Activated naive CD4-positive, alpha-beta T cell treated with anti-CD3 and anti-CD28 coated beads for 36 hours (primary cell): ENCODE measurements at regions of chr14 and their contacts with region 1.

Region 1: GRCh38 chr14:90399541-90400444 is 3.0 kb downstream of the CALM1 start:
- DNase-seq: peak; percentile 93
- H3K4me3 Mint-ChIP-seq: peak overlapping the region; percentile 96
- H3K27ac Mint-ChIP-seq: peak overlapping the region; percentile 97
- H3K4me1 Mint-ChIP-seq: peaks cover 52% of the 10 kb centered on the region
- H3K27me3 Mint-ChIP-seq: no peaks in the 10 kb centered on the region

Region 2: DNA sequence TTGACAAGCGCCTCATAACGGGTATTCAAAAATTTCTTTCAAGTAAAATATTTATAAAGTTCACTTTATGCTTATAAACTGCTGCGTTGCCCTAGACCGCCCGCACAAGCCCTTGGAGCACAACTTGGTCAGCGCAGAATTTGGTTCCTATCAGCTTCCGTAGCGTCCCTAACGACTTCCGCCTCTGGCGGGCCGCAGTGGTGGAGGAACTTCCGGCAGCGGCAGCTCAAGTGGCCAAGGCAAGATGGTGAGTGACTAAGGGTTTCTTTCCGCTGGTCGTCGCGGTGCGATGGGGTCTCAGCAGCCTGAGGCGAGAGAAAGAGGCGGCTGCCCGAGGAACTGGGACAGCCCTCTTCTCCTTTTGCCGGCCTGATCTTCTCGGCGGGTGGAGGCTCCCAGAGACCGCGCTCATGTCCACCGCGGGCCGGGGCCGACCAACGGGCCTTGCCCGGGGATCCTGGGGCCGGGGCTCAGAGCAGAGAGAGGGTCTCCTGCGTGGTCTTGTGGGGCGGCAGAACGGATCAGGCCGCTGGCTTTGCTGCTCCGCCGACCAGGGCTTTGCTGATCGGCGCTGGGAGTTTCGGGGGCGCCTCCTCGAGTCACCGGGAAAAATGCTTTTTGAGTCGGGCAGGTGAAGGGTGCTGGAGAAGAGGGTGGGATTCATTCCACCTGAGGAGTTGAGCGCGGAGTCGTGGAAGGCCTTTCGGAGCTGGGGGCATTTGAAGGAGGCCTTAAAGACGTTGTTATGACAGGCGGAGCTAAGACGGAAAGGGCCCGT is 143.2 kb before region 1 on chr14 and contains the start of gene PSMC1:
- CTCF ChIA-PET with region 1: no interaction called
- intact Hi-C with region 1: loop called (anchors 2 kb)
- DNase-seq: peak; percentile 96
- H3K4me3 Mint-ChIP-seq: peak within 1 kb of the TSS; percentile 98
- H3K27ac Mint-ChIP-seq: peak within 1 kb of the TSS; percentile 93
- H3K4me1 Mint-ChIP-seq: peaks cover 32% of the 10 kb centered on the region
- H3K27me3 Mint-ChIP-seq: peaks cover 3% of the 10 kb centered on the region
- total RNA-seq, gene PSMC1: 102 to 105 TPM

Region 3: DNA sequence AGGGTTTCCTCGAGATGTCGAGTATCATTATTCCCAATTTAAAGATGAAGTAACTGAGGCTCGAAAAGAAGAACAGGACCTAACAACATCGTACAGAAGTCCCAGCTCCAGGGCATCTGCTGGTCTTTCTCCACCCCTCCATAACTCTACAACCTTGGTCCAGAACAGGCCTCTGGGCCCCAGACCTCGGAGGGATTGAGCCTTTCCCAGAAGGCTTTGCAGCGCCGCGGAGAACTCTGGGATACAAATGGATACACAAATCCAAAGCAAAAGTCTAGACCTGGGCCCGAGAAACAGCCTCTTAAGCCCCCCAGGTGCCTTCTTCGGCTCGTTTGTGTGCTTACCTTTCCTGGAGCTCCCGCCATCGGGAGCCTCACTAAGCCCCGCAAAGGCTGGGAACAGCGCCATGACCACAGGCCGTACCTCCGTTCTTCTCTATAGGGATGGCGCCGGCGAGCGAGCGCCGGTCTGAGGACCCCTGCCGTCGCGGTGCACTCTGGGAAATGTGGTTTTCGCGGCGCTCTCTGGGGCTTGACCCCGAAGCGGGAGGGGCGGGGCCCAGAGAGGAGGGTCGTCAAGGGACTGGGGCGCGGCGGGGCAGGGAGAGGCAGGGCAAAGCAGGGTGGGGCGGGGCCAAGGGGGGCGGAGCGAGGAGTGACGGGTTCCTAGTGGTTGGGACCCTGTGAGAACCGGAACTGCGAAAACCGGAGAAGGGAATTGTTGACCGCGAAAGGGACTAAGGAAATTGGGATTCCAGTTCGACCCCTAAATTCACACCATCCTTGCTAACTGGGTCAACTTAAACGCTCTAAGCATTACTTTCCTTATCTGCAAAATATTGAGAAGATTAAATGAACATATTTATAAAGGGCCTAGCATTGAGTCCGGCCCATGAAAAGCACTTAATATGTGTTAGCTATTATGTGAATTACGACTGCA is 68.0 kb before region 1 on chr14 and contains the start of gene NRDE2:
- CTCF ChIA-PET with region 1: interaction called, 3 read pairs
- intact Hi-C with region 1: loop called (anchors 1 kb)
- DNase-seq: peak; percentile 98
- H3K4me3 Mint-ChIP-seq: peak within 1 kb of the TSS; percentile 90
- H3K27ac Mint-ChIP-seq: peak within 1 kb of the TSS; percentile 92
- H3K4me1 Mint-ChIP-seq: peaks cover 23% of the 10 kb centered on the region
- H3K27me3 Mint-ChIP-seq: no peaks in the 10 kb centered on the region
- total RNA-seq, gene NRDE2: 22.0 to 23.1 TPM

Region 4: DNA sequence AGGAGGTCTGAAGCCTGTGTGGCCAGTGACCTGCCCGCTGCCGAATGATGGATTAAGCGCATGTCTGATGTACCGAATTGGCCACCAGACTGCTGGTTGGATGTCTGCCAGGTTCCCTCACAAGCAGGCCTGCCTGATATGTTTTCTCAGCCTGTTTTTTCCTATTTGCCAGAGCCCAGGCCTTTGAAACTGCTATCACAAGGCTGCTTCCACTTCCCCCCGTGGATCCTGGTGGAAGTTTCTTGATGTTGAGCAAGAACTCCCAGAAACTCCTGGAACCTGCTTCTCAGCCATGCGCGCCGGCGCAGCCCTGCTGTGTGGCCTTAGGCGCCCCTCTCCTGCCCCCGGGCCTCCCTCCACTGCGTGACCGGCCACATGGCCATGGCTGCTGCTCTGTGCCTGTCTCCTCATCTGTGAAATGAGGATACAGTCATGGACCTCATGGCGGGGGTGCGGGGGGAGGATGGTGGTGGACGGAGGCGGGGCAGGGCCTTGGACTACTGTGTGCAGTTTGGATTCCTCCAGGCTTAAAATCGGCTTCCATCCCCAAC is 53.7 kb after region 1 on chr14:
- CTCF ChIA-PET with region 1: no interaction called
- intact Hi-C with region 1: loop called (anchors 2 kb)
- DNase-seq: no peak
- H3K4me3 Mint-ChIP-seq: no peak overlapping the region
- H3K27ac Mint-ChIP-seq: no peak overlapping the region
- H3K4me1 Mint-ChIP-seq: peaks cover 9% of the 10 kb centered on the region
- H3K27me3 Mint-ChIP-seq: no peaks in the 10 kb centered on the region

Region 5: DNA sequence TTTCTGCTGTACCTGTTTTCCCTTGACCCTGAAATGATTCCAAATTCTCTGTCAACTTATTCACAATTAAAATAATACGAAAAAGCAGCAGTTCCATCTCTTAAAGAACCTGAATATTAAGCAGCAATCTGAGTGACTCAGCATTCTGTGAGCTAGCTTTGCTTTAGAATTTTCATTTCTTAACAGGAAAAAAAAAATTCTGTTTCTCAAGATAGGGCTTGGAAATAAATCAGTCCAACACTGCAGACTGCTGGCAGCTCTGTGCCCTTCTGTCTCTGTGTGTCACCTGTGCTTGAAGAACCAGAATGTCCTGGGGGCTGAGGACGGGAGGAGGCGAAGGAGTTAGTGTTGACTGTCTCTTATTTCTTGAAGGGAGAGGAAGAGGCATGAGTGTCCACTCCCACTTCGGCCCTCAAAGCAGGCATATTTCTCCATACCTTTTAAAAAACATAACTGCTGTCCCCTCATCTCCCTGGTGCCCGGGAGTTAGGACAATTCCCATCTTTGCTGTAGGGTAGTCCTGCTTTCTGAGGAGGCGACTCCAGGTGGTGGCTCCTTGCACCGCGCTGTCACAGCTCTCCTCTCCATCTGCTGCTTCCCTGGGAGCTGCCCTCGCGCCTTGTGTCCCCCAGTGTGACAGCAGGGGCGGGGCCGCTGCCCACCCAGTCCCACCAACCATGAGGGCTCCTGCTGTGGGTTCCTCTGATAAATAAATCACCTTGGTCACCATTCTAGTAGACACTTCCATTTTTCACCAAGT is 200.1 kb after region 1 on chr14:
- CTCF ChIA-PET with region 1: no interaction called
- intact Hi-C with region 1: loop called (anchors 1 kb)
- DNase-seq: peak; percentile 18
- H3K4me3 Mint-ChIP-seq: no peak overlapping the region
- H3K27ac Mint-ChIP-seq: no peak overlapping the region
- H3K4me1 Mint-ChIP-seq: no peaks in the 10 kb centered on the region
- H3K27me3 Mint-ChIP-seq: peaks cover 2% of the 10 kb centered on the region

Region 6: GRCh38 chr14:90697577-90698206 is 297.9 kb after region 1 on chr14:
- CTCF ChIA-PET with region 1: interaction called, 17 read pairs
- intact Hi-C with region 1: loop called (anchors 1 kb)
- DNase-seq: peak; percentile 91
- H3K4me3 Mint-ChIP-seq: no peak overlapping the region
- H3K27ac Mint-ChIP-seq: no peak overlapping the region
- H3K4me1 Mint-ChIP-seq: no peaks in the 10 kb centered on the region
- H3K27me3 Mint-ChIP-seq: no peaks in the 10 kb centered on the region

Region 7: DNA sequence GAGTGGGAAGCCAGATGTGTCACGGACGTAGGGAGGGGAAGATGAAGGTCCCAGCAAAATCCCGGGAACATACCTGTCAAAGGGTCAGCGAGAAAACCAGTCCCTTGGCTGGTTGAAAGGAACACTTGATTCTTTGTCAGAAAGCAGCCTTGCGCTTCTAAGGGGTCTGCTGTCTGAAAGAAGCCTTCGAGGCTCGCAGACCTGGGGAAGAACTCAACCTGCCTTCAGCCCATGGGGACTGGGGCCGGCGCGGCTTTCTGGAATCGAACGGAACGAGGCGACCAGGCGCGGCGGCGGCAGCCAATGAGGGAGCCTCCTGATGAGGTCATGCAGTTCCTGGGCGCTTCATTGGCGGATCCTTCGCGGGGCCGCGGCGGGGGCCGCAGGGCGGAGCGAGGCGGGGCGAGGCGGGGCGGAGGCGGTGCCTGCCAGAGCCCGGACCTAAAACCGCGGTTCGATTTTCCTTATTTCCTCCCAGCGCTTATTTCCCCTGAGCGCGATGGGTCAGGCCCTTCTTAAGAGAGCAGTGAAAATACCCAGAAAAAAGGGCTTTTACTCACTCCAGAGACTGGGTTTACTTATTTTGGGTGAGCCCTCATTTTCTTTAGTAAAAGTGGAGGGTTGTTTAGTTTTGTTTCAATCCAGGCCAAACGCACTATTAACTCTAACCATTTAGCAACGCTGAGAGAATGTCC is 428.3 kb after region 1 on chr14:
- CTCF ChIA-PET with region 1: no interaction called
- intact Hi-C with region 1: loop called (anchors 1 kb)
- DNase-seq: peak; percentile 96
- H3K4me3 Mint-ChIP-seq: peak overlapping the region; percentile 76
- H3K27ac Mint-ChIP-seq: peak overlapping the region; percentile 66
- H3K4me1 Mint-ChIP-seq: peaks cover 17% of the 10 kb centered on the region
- H3K27me3 Mint-ChIP-seq: no peaks in the 10 kb centered on the region